AG04450 (cell line): ENCODE measurements at regions of chr2 and their contacts with region 1.

Region 1: DNA sequence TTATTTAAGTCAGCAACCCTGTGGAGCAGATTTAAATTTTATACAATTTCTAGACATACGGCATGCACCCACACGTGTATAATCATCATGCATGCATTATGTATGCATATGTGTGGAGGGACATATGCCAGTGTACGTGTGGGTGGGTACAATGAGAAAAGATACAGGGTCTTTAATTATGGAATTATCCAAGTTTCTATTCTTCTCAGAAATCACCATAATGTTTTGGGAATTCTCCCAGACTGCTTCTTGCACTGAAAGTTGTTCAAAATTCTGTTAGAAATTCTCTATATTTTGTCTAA is 63.9 kb upstream of the TMEM18 start:
- DNase-seq: no peak
- H3K4me3 ChIP-seq: peak overlapping the region; percentile 54
- H3K27ac ChIP-seq: no peak overlapping the region
- H3K27me3 ChIP-seq: no peaks in the 10 kb centered on the region
- CTCF ChIP-seq: no peak

Region 2: DNA sequence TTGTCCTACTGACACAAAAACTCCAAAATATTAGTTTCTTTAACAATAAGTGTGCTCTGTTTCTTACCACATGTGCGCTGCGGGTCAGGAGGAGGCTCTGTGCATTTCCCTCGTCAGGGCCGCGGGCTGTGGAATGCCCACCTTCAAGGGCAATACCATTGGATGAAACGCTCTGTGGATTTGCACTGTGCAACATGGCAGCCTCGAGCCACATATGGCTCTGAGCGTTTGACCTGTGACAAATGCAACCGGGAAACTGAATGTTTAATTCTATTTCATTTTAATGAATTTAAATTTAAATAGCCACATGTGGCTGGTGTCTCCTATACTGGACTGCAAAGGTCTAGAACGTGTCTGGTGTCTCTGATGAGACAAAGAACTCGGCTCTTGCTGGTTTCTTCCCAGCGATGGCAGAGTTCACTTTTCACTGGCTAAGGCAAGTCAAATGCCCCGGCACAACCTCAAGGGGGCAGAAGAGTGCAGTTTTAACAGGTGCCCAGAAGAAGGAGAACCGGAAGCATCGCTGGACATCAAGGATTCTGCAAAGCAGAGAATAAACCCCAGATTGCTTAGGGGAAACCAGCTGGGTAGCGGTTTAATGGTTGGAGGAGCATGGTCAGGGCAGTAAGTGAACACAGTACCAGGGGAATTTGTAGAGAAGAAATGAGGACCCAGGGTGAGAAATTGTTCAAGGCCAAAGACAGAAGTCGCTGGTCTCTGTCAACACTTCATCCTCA is 27.0 kb before region 1 on chr2:
- CTCF ChIA-PET with region 1: interaction called, 14 read pairs
- POLR2A ChIA-PET with region 1: no interaction called
- DNase-seq: peak; percentile 10
- H3K4me3 ChIP-seq: no peak overlapping the region
- H3K27ac ChIP-seq: no peak overlapping the region
- H3K27me3 ChIP-seq: no peaks in the 10 kb centered on the region
- CTCF ChIP-seq: peak; percentile 81